Activated CD4-positive, alpha-beta memory T cell treated with anti-CD3 and anti-CD28 coated beads, Interleukin-2, amount 10 ng/mL, durations not matched to agents 7 days and 5 days (primary cell): ENCODE measurements at regions of chr2 and their contacts with region 1.

Region 1: DNA sequence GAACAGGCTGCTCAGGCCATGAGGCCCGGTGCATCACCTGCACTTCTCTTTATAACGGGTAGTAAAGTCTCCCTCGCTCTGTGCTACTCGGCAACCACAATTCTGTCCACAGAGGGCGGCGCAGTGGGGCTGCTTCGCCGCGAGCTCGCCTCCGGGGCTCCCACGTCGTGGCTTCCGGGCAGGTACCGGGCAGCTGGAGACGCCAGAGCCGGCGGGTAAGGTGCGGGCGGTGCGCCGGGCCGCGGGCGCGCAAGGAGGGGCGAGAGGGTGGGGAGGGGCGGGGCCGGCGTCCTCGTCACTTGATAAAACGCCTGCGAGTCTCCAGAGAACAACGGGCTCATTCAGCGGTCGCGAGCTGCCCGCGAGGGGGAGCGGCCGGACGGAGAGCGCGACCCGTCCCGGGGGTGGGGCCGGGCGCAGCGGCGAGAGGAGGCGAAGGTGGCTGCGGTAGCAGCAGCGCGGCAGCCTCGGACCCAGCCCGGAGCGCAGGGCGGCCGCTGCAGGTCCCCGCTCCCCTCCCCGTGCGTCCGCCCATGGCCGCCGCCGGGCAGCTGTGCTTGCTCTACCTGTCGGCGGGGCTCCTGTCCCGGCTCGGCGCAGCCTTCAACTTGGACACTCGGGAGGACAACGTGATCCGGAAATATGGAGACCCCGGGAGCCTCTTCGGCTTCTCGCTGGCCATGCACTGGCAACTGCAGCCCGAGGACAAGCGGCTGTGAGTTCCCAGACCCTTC is at the start of gene ITGA6:
- DNase-seq: peak; percentile 74
- H3K4me3 Mint-ChIP-seq: peak within 1 kb of the TSS; percentile 73
- H3K27ac Mint-ChIP-seq: no peak within 1 kb of the TSS
- H3K4me1 Mint-ChIP-seq: peaks cover 29% of the 10 kb centered on the region
- H3K27me3 Mint-ChIP-seq: peaks cover 62% of the 10 kb centered on the region
- total RNA-seq, gene ITGA6: 17.7 to 18.0 TPM

Region 2: DNA sequence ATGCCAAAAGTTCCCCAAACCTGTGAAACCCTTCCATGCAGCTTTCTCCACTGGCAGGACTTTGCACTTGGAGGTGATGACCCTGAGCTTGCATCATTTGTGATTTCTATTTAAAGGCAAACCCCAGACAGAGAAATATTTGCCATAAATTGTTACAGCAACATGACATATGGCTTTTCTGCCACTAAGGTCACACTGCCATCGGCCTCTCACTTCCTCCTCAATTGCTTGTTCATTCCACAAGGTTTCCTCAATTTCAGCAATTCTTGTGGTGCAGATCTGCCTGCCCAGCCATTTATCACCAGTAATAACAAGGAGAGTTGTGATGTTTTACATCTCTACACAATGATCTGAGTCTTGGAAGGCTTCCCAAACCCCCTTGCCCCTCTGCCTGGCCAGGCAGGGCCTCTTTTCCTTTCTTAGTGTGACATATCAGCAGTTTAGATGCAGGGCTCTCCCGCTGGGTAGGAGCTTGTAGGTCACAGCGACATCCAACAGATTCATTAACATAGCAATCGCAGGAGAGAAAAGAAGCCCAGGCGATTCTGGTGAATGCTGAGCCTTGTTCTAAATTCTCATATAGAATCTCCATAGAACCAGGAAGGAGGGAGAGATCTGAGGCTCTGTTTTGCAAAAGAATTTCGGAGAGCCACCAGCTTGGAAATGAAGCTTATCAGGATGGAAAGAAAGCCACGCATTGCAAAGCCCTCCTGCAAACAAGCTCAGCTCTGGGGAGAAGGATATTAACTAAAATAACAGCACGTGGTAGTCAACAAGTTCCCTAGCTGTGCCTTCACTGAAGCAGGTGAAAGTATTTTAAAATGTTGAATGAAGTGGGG is 46.8 kb before region 1 on chr2:
- CTCF ChIA-PET with region 1: no interaction called
- POLR2A ChIA-PET with region 1: no interaction called
- DNase-seq: no peak
- H3K4me3 Mint-ChIP-seq: no peak overlapping the region
- H3K27ac Mint-ChIP-seq: no peak overlapping the region
- H3K4me1 Mint-ChIP-seq: no peaks in the 10 kb centered on the region
- H3K27me3 Mint-ChIP-seq: peaks cover 2% of the 10 kb centered on the region

Region 3: GRCh38 chr2:172442072-172442895 is 14.9 kb after region 1 on chr2:
- CTCF ChIA-PET with region 1: interaction called, 17 read pairs
- POLR2A ChIA-PET with region 1: interaction called, 6 read pairs
- DNase-seq: peak; percentile 37
- H3K4me3 Mint-ChIP-seq: no peak overlapping the region
- H3K27ac Mint-ChIP-seq: peak overlapping the region; percentile 27
- H3K4me1 Mint-ChIP-seq: peaks cover 29% of the 10 kb centered on the region
- H3K27me3 Mint-ChIP-seq: peaks cover 11% of the 10 kb centered on the region

Region 4: GRCh38 chr2:172555522-172556283 is 128.3 kb after region 1 on chr2 and contains the start of gene PDK1:
- CTCF ChIA-PET with region 1: no interaction called
- POLR2A ChIA-PET with region 1: no interaction called
- DNase-seq: peak; percentile 93
- H3K4me3 Mint-ChIP-seq: peak within 1 kb of the TSS; percentile 89
- H3K27ac Mint-ChIP-seq: peak within 1 kb of the TSS; percentile 84
- H3K4me1 Mint-ChIP-seq: peaks cover 52% of the 10 kb centered on the region
- H3K27me3 Mint-ChIP-seq: peaks cover 2% of the 10 kb centered on the region
- total RNA-seq, gene PDK1: 30.7 to 38.5 TPM